Heart left ventricle (tissue), 16 donors: ENCODE measurements at regions of chr15 and their contacts with region 1.

Region 1: DNA sequence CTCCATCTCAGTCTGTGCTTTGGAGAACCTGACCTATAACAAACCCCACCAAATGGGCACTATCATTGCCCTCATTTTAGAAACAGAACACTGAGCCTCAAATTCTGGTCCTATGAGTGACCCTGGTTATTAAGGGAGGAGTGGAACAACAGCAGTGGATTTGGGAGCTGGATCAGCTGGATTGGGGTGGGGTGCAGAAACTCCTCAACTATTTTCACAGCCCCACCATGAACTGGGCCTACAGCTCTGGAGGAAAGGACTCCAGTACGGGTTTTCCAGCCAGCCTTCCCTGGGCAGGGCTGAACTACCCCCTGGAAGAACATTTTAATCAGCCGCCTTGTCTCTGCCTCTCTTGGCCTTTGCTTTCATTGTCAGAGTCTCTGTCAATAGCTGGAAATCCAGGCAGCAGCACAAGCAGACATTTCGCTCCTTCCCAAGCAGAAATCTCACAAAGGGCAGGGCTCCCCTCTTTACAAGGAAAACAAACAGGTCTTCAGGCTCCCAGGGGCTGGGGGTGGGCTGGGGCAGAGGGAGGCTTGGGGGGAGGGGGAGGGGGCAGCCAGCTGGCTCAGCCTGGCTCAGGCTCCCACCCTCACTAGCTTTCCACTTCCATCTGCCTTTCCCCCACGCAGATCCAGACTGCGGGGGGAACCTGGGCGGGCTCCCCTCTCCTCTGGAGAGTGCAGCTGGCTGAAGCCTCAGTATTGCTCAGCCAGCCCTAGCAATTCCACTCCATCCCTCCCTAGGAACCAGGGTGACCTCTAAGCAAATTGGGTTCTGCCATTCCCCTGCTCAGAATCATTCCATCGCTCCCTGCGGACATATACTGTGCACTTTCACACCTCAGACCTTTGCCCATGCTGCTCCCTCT is 13.7 kb upstream of the TLE3 start:
- DNase-seq: peak; percentile 67 to 84 (median 81)
- ATAC-seq: peak; percentile 92 to 97 (median 96)
- H3K4me3 ChIP-seq: peak overlapping the region in 9 of 12 donors; percentile 17 to 42 (median 36)
- H3K27ac ChIP-seq: peak overlapping the region; percentile 72 to 93 (median 87)
- H3K4me1 ChIP-seq: peaks cover 0 to 39% (median 13%) of the 10 kb centered on the region in 12 donors
- H3K27me3 ChIP-seq: no peaks in the 10 kb centered on the region
- CTCF ChIP-seq: no peak
- POLR2A ChIP-seq: no peak

Region 2: GRCh38 chr15:69979783-69980182 is 131.7 kb before region 1 on chr15:
- intact Hi-C with region 1: no loop called
- DNase-seq: no peak
- ATAC-seq: no peak
- H3K4me3 ChIP-seq: no peak overlapping the region
- H3K27ac ChIP-seq: no peak overlapping the region
- H3K4me1 ChIP-seq: no peaks in the 10 kb centered on the region
- H3K27me3 ChIP-seq: peaks cover 0 to 44% (median 6%) of the 10 kb centered on the region in 9 donors
- CTCF ChIP-seq: no peak
- POLR2A ChIP-seq: no peak

Region 3: DNA sequence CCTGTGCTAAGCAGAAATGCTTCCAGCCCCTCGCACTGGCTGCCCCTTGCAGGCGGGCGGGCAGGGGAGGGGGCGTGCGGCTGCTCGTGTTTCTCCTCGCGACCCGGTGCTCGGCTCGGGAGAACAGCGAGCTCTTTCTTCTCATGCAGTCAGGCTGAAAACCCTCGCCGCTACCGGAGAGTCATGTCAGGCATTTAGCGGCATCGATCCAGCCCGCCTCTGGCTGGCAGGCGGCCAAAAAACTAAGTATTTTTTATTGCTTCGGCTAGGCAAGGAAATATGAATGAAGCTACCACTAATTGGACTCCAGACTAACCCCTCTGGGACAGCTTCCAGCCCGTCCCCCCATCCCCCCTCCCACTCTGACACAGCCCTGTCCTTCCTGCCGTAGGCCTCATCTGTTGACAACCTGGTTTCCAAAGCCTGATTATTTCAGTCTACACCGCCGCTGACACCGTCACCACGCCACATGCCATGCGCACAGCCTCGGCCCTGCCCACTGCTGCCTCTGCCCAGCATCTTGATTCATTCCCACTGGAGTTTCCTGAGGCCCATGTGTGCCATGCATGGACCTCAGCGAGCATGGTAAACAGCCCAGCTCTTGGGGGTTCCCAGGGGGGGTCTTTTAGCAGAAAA is 49.0 kb before region 1 on chr15:
- intact Hi-C with region 1: no loop called
- DNase-seq: peak; percentile 69 to 79 (median 77)
- ATAC-seq: peak; percentile 89 to 94 (median 91)
- H3K4me3 ChIP-seq: peak overlapping the region in 7 of 12 donors; percentile 11 to 46 (median 32)
- H3K27ac ChIP-seq: peak overlapping the region in 3 of 12 donors; percentile 8 to 52 (median 47)
- H3K4me1 ChIP-seq: peaks cover 0 to 31% (median 12%) of the 10 kb centered on the region in 12 donors
- H3K27me3 ChIP-seq: no peaks in the 10 kb centered on the region
- CTCF ChIP-seq: no peak
- POLR2A ChIP-seq: no peak

Region 4: GRCh38 chr15:70170901-70171886 is 59.8 kb after region 1 on chr15:
- intact Hi-C with region 1: loop called in 1 of 10 experiments (anchors 5 kb)
- DNase-seq: no peak
- ATAC-seq: no peak
- H3K4me3 ChIP-seq: no peak overlapping the region
- H3K27ac ChIP-seq: no peak overlapping the region
- H3K4me1 ChIP-seq: peaks cover 0 to 19% (median 9%) of the 10 kb centered on the region in 12 donors
- H3K27me3 ChIP-seq: peaks cover 0 to 11% (median 0%) of the 10 kb centered on the region in 9 donors
- CTCF ChIP-seq: no peak
- POLR2A ChIP-seq: no peak

Region 5: DNA sequence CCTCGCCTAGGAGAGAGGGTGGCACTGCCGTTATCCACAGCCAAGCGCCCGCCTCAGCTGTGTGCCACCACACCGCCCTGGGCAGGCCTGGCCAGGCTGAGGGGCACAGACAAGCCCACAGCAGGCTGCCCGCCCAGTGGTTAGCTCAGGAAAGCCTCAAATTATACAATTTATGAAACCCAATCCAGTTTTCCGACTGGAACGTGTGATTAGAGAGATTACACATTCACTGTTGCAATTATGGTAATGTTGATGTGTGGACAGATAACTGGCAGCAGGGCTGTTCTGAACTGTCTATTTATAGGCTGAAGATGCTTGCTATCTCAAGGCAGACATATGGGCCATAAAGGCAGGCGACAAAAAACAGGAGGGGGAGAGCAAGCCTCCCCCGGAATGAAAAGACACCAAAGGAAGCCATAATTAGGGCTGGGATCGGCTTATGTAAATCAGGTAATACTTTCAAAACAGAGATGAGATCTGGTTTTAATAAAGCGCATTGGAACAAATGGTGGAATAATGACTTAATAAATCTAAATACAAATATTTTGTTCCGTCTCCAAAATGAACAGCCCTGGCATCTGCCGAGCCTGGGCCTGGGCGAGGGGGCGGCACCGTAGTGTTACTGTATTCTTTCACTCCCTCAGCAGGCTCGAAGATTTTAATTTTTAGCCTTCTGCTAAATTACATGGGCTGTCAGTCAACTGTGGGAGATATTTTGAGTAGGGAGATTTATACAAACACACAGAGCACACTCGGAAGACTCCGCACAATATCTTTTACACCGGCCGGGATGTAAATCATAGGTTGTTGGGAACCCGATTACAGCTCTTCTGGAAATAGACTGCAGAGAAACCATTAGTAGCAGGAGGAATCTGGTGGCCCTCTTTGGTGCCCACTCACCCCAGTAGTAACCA is 89.3 kb after region 1 on chr15:
- intact Hi-C with region 1: no loop called
- DNase-seq: no peak
- ATAC-seq: no peak
- H3K4me3 ChIP-seq: no peak overlapping the region
- H3K27ac ChIP-seq: peak overlapping the region in 1 of 12 donors; percentile 56
- H3K4me1 ChIP-seq: peaks cover 0 to 21% (median 8%) of the 10 kb centered on the region in 12 donors
- H3K27me3 ChIP-seq: no peaks in the 10 kb centered on the region
- CTCF ChIP-seq: no peak
- POLR2A ChIP-seq: no peak

Region 6: DNA sequence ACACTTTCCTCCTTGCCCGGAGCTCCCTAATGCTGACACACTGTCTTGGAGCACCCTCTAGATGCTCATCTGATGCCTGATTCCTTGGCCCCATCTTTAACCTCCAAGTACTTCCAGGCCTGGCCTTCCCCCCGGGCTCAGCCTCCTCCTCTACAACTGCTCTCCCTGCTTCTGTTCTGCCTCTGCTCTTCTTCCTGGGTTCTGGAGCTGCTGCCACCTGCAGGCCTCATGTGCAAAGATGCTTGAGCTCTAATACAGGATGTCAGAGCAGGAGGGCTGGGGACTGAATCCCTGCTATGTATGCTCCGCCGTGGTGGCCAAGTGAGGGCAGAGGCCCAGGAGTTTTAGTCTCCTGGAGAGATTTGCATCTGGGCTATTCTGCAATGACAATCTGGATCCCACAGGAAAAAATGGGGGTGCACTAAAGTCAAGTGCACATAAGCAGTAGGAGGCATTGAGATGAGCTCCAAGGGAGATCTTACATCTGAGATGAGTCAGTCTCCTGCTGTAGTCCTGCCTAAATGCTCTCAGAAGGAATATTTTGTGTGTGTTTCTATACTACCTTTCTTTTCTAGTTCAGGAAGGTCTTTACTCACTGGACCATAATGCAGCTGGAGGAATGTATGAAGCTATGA is 355.6 kb after region 1 on chr15:
- intact Hi-C with region 1: loop called in 1 of 10 experiments (anchors 10 kb)
- DNase-seq: peak in 4 of 5 donors; percentile 33 to 68 (median 41)
- ATAC-seq: peak; percentile 62 to 84 (median 74)
- H3K4me3 ChIP-seq: no peak overlapping the region
- H3K27ac ChIP-seq: no peak overlapping the region
- H3K4me1 ChIP-seq: peaks cover 0 to 15% (median 0%) of the 10 kb centered on the region in 12 donors
- H3K27me3 ChIP-seq: peaks cover 0 to 23% (median 2%) of the 10 kb centered on the region in 9 donors
- CTCF ChIP-seq: peak; percentile 39 to 71 (median 50)
- POLR2A ChIP-seq: no peak